ENCODE measurements at regions of chr2 and their contacts with region 1.

Region 1: GRCh38 chr2:85813982-85814801 is 60.4 kb downstream of the ATOH8 start:
- DNase-seq: peak; percentile 96 to 97
- H3K4me3 ChIP-seq: no peak overlapping the region
- H3K27ac ChIP-seq: peak overlapping the region; percentile 78 to 95 (median 89)
- H3K4me1 ChIP-seq: peaks cover 45 to 57% of the 10 kb centered on the region in 2 donors
- H3K27me3 ChIP-seq: no peaks in the 10 kb centered on the region
- CTCF ChIP-seq: peak; percentile 82 to 98 (median 96)
- POLR2A ChIP-seq: no peak

Region 2: DNA sequence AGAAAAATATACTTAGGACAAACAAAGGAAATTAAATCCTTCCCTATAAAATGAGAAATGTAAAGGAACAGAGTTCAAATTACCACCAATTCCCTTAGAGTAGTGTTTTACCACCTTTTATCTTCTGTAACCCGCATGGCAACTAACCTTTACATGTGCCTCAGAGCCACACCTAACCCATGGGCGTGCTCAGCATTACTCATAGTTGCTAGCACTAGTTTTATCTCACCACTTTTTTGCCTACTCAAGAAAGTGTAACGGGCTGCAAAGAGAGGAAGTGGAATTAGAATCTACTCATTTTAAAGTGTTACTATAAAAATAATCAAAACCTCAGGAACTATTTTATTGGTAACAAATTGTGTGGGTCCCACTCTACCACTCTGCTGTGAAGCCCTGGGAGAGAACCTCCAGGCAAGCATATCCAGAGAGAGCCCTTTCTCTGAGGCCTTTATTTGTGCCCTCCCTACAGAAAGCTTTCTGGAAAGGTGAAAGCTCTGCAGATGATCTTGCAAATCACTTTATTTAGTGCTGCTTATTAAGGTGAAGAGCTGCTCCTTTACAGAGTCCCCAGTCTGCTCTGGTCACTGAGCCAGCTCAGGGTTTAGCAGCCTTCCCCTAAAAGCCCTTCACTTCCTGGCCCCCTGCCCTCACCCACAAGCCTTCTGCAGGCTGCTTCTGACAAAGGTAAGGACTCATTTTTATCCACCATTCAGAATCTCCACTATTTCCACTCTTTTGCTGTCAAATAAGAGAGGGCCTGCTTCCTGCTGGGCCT is 1032.1 kb before region 1 on chr2:
- intact Hi-C with region 1: no loop called
- DNase-seq: peak; percentile 47 to 51
- H3K4me3 ChIP-seq: no peak overlapping the region
- H3K27ac ChIP-seq: peak overlapping the region in 1 of 3 donors; percentile 27
- H3K4me1 ChIP-seq: peaks cover 0 to 15% of the 10 kb centered on the region in 2 donors
- H3K27me3 ChIP-seq: no peaks in the 10 kb centered on the region
- CTCF ChIP-seq: no peak
- POLR2A ChIP-seq: no peak

Region 3: DNA sequence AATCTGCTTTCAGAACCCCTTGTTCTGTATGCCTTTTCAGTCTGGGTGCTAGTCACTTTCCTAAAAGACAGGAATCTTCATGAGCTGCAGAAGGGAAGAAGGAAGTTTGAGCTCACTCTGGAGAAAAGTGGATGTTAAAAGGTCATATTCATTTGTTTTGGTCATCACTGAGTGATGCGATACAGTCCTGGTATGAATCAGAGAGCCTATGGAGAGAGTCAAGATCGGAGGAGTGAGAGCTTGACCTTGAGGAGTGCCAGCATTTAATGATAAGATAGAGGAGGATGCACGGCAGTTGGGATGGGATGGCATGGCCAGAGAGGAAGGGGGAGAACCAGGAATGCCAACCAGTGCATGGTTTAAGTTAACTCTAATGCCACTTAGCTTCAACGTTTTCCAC is 178.6 kb before region 1 on chr2:
- intact Hi-C with region 1: loop called (anchors 10 kb)
- DNase-seq: no peak
- H3K4me3 ChIP-seq: no peak overlapping the region
- H3K27ac ChIP-seq: no peak overlapping the region
- H3K4me1 ChIP-seq: peaks cover 0 to 6% of the 10 kb centered on the region in 2 donors
- H3K27me3 ChIP-seq: no peaks in the 10 kb centered on the region
- CTCF ChIP-seq: no peak
- POLR2A ChIP-seq: no peak

Region 4: DNA sequence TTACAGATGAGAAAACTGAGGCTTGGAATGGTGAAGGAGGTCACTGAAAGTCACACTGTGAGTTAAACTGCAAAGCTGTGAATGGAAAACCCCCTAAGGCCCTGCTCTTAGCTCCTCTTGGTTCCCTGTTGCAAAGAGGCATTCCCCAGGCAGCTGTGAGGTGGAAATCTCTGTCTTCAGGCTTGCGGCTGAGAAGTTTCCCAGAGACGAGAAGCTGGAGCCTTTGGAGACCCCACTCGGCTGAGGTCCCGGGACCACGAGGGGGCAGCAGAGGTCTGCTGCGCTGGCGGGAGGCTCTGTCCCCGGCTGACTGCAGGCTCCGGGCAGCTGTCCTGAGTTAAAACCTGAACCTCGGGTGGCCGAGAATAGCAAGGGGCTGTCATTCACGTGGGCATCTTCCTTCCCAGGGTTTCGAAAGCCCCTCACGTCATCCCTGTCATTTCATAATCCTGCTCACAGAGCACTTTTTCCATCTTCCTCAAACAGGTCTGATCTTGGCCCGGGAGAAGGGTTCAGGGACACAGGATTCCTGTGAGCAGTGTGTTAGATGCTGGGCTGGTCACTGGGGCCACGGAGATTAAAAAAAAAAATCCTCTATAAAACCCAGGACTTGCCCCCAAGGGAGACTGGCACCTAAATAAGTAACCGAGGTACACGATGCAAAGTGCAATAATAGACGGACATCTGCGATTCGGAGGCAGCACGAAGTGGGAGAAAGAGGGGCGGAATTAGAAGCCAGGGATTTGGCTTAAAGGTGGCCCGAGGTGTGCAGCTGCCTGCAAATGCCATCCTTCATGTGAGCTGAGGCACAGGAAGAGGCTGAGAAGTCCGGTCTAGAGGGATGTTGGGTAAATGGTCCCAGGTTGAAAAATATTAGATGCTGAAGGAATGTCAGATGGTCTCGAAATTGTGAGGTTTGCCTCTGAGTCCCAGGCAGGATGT is 85.0 kb before region 1 on chr2:
- intact Hi-C with region 1: loop called (anchors 5 kb)
- DNase-seq: peak; percentile 92
- H3K4me3 ChIP-seq: no peak overlapping the region
- H3K27ac ChIP-seq: peak overlapping the region in 2 of 3 donors; percentile 76 to 92
- H3K4me1 ChIP-seq: peaks cover 15 to 67% of the 10 kb centered on the region in 2 donors
- H3K27me3 ChIP-seq: no peaks in the 10 kb centered on the region
- CTCF ChIP-seq: peak; percentile 81 to 98 (median 96)
- POLR2A ChIP-seq: peak in 1 of 2 donors; percentile 33